ENCODE measurements at regions of chr10 and their contacts with region 1.

Region 1: GRCh38 chr10:84352251-84352842 is 24.0 kb downstream of the CCSER2 start:
- DNase-seq: peak; percentile 66 to 74
- H3K4me3 ChIP-seq: no peak overlapping the region
- H3K4me3 Mint-ChIP-seq: no peak overlapping the region
- H3K27ac Mint-ChIP-seq: no peak overlapping the region
- H3K4me1 ChIP-seq: no peaks in the 10 kb centered on the region
- H3K4me1 Mint-ChIP-seq: peaks cover 15% of the 10 kb centered on the region
- H3K27me3 ChIP-seq: no peaks in the 10 kb centered on the region
- H3K27me3 Mint-ChIP-seq: no peaks in the 10 kb centered on the region
- CTCF ChIP-seq: peak; percentile 63 to 77

Region 2: DNA sequence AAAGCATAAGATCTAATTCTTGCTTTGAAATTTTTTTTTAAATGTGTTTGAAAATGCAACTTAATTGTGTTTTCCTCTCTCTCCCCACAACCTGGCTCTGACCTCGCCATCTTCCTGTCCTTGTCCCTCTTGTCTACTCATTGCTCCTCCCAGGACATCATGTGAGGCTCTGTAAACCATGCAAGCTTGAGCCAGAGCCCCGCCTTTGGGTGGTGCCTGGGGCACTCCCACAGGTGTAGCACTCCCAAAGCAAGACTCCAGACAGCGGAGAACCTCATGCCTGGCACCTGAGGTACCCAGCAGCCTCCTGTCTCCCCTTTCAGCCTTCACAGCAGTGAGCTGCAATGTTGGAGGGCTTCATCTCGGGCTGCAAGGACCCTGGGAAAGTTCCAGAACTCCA is 167.8 kb before region 1 on chr10:
- CTCF ChIA-PET with region 1: no interaction called
- POLR2A ChIA-PET with region 1: no interaction called
- intact Hi-C with region 1: no loop called
- DNase-seq: no peak
- H3K4me3 ChIP-seq: no peak overlapping the region
- H3K4me3 Mint-ChIP-seq: no peak overlapping the region
- H3K27ac Mint-ChIP-seq: no peak overlapping the region
- H3K4me1 ChIP-seq: no peaks in the 10 kb centered on the region
- H3K4me1 Mint-ChIP-seq: no peaks in the 10 kb centered on the region
- H3K27me3 ChIP-seq: no peaks in the 10 kb centered on the region
- H3K27me3 Mint-ChIP-seq: peaks cover 2% of the 10 kb centered on the region
- CTCF ChIP-seq: no peak

Region 3: GRCh38 chr10:84264611-84265141 is 87.7 kb before region 1 on chr10:
- CTCF ChIA-PET with region 1: interaction called, 4 read pairs
- POLR2A ChIA-PET with region 1: no interaction called
- intact Hi-C with region 1: loop called (anchors 1 kb)
- DNase-seq: peak; percentile 63 to 75
- H3K4me3 ChIP-seq: no peak overlapping the region
- H3K4me3 Mint-ChIP-seq: no peak overlapping the region
- H3K27ac Mint-ChIP-seq: no peak overlapping the region
- H3K4me1 ChIP-seq: no peaks in the 10 kb centered on the region
- H3K4me1 Mint-ChIP-seq: peaks cover 13% of the 10 kb centered on the region
- H3K27me3 ChIP-seq: no peaks in the 10 kb centered on the region; the same call in 1 of the 2 replicates
- H3K27me3 Mint-ChIP-seq: peaks cover 4% of the 10 kb centered on the region
- CTCF ChIP-seq: peak; percentile 94 to 96

Region 4: GRCh38 chr10:84328418-84329195 is 23.7 kb before region 1 on chr10 and contains the start of gene CCSER2:
- CTCF ChIA-PET with region 1: interaction called, 15 read pairs
- POLR2A ChIA-PET with region 1: interaction called, 7 read pairs
- intact Hi-C with region 1: no loop called
- DNase-seq: peak; percentile 96 to 98
- H3K4me3 ChIP-seq: peak within 1 kb of the TSS; percentile 76
- H3K4me3 Mint-ChIP-seq: peak within 1 kb of the TSS; percentile 90
- H3K27ac Mint-ChIP-seq: peak within 1 kb of the TSS; percentile 87
- H3K4me1 ChIP-seq: peaks cover 26% of the 10 kb centered on the region
- H3K4me1 Mint-ChIP-seq: peaks cover 14% of the 10 kb centered on the region
- H3K27me3 ChIP-seq: no peaks in the 10 kb centered on the region
- H3K27me3 Mint-ChIP-seq: no peaks in the 10 kb centered on the region
- CTCF ChIP-seq: no peak
- total RNA-seq, gene CCSER2: 23.1 and 28.3 TPM in 2 replicates

Region 5: DNA sequence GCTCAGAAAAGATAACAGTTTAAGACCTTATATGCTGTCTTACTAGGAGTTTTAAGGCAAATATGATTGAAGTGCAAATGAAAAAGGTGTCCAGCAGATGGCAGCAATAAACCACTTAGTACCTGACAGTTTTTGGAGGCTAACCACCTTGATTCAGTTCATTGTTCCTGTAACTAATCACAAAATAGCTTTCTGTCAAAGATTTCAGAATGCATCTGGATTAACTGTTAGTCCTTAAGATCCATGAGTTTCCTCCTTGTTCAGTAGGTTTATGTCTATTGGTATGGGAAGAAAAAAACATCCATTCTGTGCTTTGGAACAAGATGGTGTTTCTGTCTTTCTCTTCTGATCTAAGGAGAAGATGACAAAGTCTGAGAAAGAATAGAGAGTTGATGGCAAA is 22.7 kb after region 1 on chr10:
- CTCF ChIA-PET with region 1: no interaction called
- POLR2A ChIA-PET with region 1: no interaction called
- intact Hi-C with region 1: loop called (anchors 1 kb)
- DNase-seq: peak in 1 of 2 experiments; percentile 64
- H3K4me3 ChIP-seq: no peak overlapping the region
- H3K4me3 Mint-ChIP-seq: no peak overlapping the region
- H3K27ac Mint-ChIP-seq: no peak overlapping the region
- H3K4me1 ChIP-seq: peaks cover 4% of the 10 kb centered on the region; the same call in 1 of the 2 replicates
- H3K4me1 Mint-ChIP-seq: no peaks in the 10 kb centered on the region
- H3K27me3 ChIP-seq: no peaks in the 10 kb centered on the region
- H3K27me3 Mint-ChIP-seq: no peaks in the 10 kb centered on the region
- CTCF ChIP-seq: peak; percentile 61 to 75

Region 6: DNA sequence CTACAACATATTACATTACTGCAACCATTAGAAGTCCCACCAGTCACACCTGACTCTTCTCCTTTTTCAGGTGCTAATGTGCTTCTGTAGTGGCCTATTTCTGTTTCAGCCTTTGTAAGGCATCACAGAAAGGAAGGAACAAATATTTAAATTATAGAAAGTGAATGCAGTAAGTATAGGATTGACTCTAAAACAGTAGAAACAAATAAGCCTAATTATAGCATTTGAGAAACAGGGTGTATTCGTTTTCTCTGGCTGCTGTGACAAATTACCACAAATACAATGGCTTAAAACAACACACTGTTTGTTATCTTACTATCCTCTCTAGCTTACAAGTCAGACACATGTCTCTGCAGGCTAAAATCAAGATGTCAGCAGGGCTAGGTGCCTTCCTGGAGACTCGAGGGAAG is 45.4 kb after region 1 on chr10:
- CTCF ChIA-PET with region 1: no interaction called
- POLR2A ChIA-PET with region 1: no interaction called
- intact Hi-C with region 1: no loop called
- DNase-seq: no peak
- H3K4me3 ChIP-seq: no peak overlapping the region
- H3K4me3 Mint-ChIP-seq: no peak overlapping the region
- H3K27ac Mint-ChIP-seq: peak overlapping the region; percentile 67
- H3K4me1 ChIP-seq: no peaks in the 10 kb centered on the region
- H3K4me1 Mint-ChIP-seq: peaks cover 7% of the 10 kb centered on the region
- H3K27me3 ChIP-seq: no peaks in the 10 kb centered on the region
- H3K27me3 Mint-ChIP-seq: no peaks in the 10 kb centered on the region
- CTCF ChIP-seq: no peak

Measured in Caco-2 (cell line).